ENCODE measurements at regions of chr9 and their contacts with region 1.

Region 1: DNA sequence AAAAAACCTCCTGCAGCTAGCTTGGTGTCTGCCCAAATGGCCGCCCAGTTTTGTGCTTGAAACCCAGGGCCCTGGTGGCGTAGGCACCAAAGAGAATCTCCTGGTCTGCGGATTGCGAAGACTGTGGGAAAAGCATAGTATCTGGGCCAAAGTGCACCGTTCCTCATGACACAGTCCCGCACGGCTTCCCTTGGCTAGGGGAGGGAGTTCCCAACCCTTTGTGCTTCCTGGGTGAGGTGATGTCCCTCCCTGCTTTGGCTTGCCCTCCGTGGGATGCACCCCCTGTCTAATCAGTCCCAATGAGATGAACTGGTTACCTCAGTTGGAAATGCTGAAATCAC is 83.0 kb upstream of the JAK2 start:
- DNase-seq: no peak
- H3K4me3 ChIP-seq: no peak overlapping the region
- H3K27ac ChIP-seq: no peak overlapping the region; the same call in 1 of the 2 replicates
- H3K4me1 ChIP-seq: peaks cover 0 to 6% (median 2%) of the 10 kb centered on the region in 4 experiments; a peak in 4 of 7 replicates
- H3K27me3 ChIP-seq: no peaks in the 10 kb centered on the region
- CTCF ChIP-seq: no peak
- EP300 ChIP-seq: no peak
- POLR2A ChIP-seq: no peak
- RAD21 ChIP-seq: no peak

Region 2: DNA sequence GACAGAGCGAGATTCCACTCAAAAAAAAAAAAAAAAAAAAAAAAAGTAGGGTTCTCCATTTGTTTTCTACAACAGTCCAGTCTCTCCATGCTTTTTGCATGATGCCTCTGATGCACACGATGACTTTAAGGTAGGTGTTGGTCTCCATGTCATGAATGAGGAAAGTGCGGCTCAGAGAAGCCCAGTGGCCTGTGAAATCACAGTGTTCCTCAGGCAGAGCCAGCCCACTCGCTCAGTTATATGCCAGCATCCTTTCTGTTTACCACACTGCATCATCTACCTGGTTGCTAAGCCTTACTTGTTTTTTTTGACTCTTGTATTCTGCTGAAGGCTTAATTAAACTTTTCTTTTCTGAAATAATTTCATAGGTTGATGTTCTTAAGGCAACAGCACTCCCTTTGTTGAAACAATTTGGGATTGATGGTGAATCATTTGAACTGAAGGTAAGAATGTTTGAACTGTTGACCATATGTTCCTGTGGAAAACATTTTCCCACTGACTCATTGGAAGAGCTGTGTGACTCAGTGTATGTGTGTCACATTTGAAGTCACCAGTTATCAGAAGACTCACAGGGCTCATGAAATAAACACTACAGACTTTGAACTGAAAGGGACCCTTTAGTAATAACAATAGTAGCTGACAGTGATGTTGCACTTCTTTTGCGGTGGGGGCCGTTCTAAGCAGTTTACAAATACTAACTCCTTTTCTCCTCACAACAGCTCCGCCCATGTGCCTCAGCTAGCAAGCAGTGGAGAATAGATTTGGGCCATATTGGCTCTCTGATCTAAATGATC is 69.1 kb before region 1 on chr9:
- CTCF ChIA-PET with region 1: interaction called, 12 read pairs
- POLR2A ChIA-PET with region 1: no interaction called
- DNase-seq: no peak
- H3K4me3 ChIP-seq: no peak overlapping the region
- H3K27ac ChIP-seq: no peak overlapping the region
- H3K4me1 ChIP-seq: no peaks in the 10 kb centered on the region
- H3K27me3 ChIP-seq: no peaks in the 10 kb centered on the region
- CTCF ChIP-seq: no peak
- EP300 ChIP-seq: no peak
- POLR2A ChIP-seq: no peak
- RAD21 ChIP-seq: no peak

Measured in H1 (cell line).